ENCODE measurements at regions of chr1 and their contacts with region 1.

Region 1: DNA sequence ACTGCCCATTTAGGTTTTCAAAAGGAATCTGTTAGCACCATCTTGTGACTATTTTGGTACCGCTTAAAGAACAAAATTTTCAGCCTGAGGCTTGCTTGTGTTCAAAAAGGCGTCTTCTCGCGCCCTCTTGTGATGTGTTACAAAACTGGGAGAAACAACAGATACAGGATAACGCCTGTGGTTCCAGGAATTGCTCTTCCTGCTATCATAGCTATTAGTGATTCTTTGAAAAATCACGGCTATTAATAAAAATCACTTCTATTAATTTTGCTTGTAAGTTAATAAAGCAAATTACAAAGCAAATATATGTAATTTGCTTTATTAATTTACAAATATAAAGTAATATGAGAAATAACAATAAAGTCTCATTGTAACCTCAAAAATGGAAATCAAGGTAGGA is 82.2 kb upstream of the ABCD3 start:
- DNase-seq: peak in 1 of 2 donors; percentile 69
- ATAC-seq: peak; percentile 93
- H3K4me3 ChIP-seq: no peak overlapping the region
- H3K27ac ChIP-seq: no peak overlapping the region
- H3K4me1 ChIP-seq: no peaks in the 10 kb centered on the region
- H3K27me3 ChIP-seq: no peaks in the 10 kb centered on the region

Region 2: DNA sequence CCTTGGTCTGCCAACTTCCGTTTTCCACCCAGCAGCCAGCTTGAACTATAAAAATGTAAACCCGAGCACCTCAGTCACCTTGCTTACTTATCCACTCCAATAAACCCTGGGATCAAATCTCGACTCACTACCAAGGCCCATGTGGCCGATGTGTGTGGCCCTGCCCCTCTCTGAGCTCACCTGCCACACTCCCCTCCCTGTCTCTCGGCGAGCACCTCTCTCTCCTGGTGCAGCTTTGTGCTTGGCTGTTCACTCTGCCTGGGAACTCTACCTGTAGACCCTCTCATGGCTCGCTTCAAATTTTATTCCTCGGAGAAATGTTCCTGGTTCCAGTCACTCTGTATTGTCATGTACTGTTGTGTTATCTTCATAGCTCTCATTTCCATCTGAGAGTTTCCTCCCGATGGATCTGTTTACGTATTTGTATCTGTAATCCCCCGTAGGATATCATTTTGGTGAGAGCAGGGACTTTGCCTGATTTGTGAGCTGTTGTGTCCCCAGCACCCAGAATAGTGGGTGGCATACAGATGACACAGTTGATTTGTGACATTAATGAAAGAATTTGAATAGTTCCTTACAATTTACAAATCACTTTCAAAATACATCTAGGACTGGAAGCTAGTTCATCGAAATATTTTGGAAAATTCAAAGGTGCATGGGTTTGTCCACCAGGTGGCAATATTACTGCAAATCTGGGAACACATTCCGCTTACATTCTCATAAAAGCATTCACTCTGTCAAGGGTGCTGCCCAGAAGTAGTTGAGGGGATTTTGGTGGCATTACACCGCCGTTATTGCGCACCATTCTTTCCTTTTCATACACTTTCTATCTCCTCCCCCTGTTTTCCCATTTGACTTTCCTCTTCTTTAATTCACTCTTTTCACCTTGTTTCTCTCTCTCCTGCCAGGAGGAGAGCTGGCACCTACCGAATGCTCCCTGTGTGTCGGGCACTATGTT is 310.3 kb before region 1 on chr1:
- intact Hi-C with region 1: loop called in 1 of 2 experiments (anchors 5 kb)
- DNase-seq: no peak
- ATAC-seq: no peak
- H3K4me3 ChIP-seq: no peak overlapping the region
- H3K27ac ChIP-seq: no peak overlapping the region
- H3K4me1 ChIP-seq: no peaks in the 10 kb centered on the region
- H3K27me3 ChIP-seq: no peaks in the 10 kb centered on the region

Region 3: GRCh38 chr1:94061513-94062443 is 274.2 kb before region 1 on chr1:
- intact Hi-C with region 1: loop called (anchors 1 to 2 kb)
- DNase-seq: peak; percentile 75 to 82
- ATAC-seq: peak; percentile 87
- H3K4me3 ChIP-seq: no peak overlapping the region
- H3K27ac ChIP-seq: no peak overlapping the region
- H3K4me1 ChIP-seq: no peaks in the 10 kb centered on the region
- H3K27me3 ChIP-seq: no peaks in the 10 kb centered on the region

Region 4: GRCh38 chr1:94463765-94464330 is 127.9 kb after region 1 on chr1:
- intact Hi-C with region 1: loop called in 1 of 2 experiments (anchors 10 kb)
- DNase-seq: no peak
- ATAC-seq: peak; percentile 50
- H3K4me3 ChIP-seq: no peak overlapping the region
- H3K27ac ChIP-seq: no peak overlapping the region
- H3K4me1 ChIP-seq: no peaks in the 10 kb centered on the region
- H3K27me3 ChIP-seq: no peaks in the 10 kb centered on the region

Measured in aorta (tissue), 5 donors.